Activated CD4-positive, alpha-beta T cell treated with anti-CD3 and anti-CD28 coated beads, Interleukin-2, amount 10 ng/mL, durations not matched to agents 24 days and 14 days (primary cell): ENCODE measurements at regions of chr11 and their contacts with region 1.

Region 1: GRCh38 chr11:18012863-18013781 is at the start of gene SERGEF:
- DNase-seq: peak; percentile 98
- H3K4me3 Mint-ChIP-seq: peak within 1 kb of the TSS; percentile 90
- H3K27ac Mint-ChIP-seq: peak within 1 kb of the TSS; percentile 92
- H3K4me1 Mint-ChIP-seq: peaks cover 37% of the 10 kb centered on the region
- H3K27me3 Mint-ChIP-seq: peaks cover 3% of the 10 kb centered on the region
- total RNA-seq, gene SERGEF: 26.2 and 35.8 TPM in 2 replicates

Region 2: GRCh38 chr11:17991783-17992433 is 21.2 kb before region 1 on chr11:
- intact Hi-C with region 1: loop called (anchors 2 kb)
- DNase-seq: peak; percentile 82
- H3K4me3 Mint-ChIP-seq: no peak overlapping the region
- H3K27ac Mint-ChIP-seq: no peak overlapping the region
- H3K4me1 Mint-ChIP-seq: peaks cover 2% of the 10 kb centered on the region
- H3K27me3 Mint-ChIP-seq: no peaks in the 10 kb centered on the region

Region 3: DNA sequence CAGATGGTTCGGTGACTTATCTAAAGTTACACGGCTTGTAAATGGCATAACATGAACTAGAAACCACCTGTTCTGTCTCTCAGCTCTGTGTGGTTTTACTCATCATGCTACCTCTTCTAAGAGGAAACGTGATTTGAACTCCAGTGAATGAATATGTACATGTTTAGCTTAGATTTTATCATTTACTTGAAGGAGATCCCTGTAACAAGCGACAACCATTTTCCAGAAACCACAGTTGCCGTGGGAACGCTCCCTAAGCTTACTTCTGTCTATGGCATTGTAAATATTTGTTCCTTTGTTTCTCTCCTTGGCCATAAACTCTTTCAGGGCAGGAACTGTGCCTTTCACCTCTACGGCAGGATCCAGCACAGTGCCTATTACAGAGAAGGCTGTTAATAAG is 50.0 kb after region 1 on chr11:
- intact Hi-C with region 1: no loop called
- DNase-seq: no peak
- H3K4me3 Mint-ChIP-seq: no peak overlapping the region
- H3K27ac Mint-ChIP-seq: no peak overlapping the region
- H3K4me1 Mint-ChIP-seq: no peaks in the 10 kb centered on the region
- H3K27me3 Mint-ChIP-seq: peaks cover 3% of the 10 kb centered on the region

Region 4: GRCh38 chr11:18383388-18384156 is 370.4 kb after region 1 on chr11:
- intact Hi-C with region 1: loop called (anchors 5 kb)
- DNase-seq: peak; percentile 90
- H3K4me3 Mint-ChIP-seq: peak overlapping the region; percentile 85
- H3K27ac Mint-ChIP-seq: peak overlapping the region; percentile 100
- H3K4me1 Mint-ChIP-seq: peaks cover 37% of the 10 kb centered on the region
- H3K27me3 Mint-ChIP-seq: no peaks in the 10 kb centered on the region

Region 5: DNA sequence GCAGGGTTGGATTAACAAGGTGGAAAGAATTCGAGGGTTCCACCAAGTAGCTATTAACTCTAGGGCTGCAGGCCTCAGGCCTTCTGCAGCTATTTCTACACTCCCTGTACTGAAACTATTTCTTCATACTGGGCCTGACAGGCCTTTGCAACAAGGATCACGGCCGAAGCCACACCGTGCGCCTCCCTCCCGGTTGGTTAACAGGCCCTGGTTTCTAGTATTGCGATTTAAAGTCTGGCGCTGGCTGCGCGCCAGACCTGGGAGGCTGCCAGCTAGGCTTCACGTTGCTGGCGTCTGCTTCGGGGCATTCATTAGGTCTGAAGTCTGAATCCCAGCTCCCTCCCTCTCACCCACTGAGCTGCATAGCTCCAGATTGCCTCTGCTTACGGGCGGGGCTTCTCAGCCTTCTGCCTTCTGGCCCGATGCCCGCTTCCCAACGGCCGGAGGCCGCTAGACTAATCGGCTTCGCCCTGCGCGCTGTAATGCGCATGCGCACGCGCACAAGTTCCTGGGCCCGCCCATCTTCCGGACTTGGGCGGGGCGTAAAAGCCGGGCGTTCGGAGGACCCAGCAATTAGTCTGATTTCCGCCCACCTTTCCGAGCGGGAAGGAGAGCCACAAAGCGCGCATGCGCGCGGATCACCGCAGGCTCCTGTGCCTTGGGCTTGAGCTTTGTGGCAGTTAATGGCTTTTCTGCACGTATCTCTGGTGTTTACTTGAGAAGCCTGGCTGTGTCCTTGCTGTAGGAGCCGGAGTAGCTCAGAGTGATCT is 382.8 kb after region 1 on chr11:
- intact Hi-C with region 1: loop called (anchors 5 kb)
- DNase-seq: peak; percentile 99
- H3K4me3 Mint-ChIP-seq: peak overlapping the region; percentile 97
- H3K27ac Mint-ChIP-seq: peak overlapping the region; percentile 98
- H3K4me1 Mint-ChIP-seq: peaks cover 54% of the 10 kb centered on the region
- H3K27me3 Mint-ChIP-seq: no peaks in the 10 kb centered on the region